ENCODE measurements at regions of chr1 and their contacts with region 1.

Region 1: DNA sequence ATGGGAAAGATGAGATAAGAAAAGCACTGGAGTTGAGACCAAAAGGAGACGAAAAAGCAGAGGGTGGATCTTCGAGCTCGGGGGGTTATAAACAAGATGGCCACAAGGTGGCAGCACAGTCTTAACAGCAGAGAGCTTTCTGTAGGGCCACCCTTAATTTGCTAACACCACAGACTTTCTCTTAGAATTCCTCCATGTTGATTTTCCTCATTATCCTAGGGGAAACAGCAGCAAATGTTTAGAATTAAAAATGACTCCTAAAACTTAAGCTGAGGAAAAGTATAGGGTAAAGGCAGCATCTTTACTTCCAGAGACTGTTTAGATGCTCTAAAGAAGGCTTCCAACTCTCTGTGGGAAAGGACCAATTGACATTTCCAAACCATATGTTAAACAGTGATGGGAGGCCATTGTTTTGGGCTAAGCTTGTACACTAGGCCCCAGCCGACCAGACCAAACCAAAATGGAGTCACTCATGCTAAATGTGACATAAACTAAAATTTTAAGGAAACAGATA is 2.5 kb upstream of the APOBEC4 start:
- DNase-seq: peak; percentile 52
- H3K4me3 Mint-ChIP-seq: no peak overlapping the region
- H3K27ac Mint-ChIP-seq: peak overlapping the region; percentile 0
- H3K4me1 Mint-ChIP-seq: peaks cover 48% of the 10 kb centered on the region
- H3K27me3 Mint-ChIP-seq: no peaks in the 10 kb centered on the region

Region 2: DNA sequence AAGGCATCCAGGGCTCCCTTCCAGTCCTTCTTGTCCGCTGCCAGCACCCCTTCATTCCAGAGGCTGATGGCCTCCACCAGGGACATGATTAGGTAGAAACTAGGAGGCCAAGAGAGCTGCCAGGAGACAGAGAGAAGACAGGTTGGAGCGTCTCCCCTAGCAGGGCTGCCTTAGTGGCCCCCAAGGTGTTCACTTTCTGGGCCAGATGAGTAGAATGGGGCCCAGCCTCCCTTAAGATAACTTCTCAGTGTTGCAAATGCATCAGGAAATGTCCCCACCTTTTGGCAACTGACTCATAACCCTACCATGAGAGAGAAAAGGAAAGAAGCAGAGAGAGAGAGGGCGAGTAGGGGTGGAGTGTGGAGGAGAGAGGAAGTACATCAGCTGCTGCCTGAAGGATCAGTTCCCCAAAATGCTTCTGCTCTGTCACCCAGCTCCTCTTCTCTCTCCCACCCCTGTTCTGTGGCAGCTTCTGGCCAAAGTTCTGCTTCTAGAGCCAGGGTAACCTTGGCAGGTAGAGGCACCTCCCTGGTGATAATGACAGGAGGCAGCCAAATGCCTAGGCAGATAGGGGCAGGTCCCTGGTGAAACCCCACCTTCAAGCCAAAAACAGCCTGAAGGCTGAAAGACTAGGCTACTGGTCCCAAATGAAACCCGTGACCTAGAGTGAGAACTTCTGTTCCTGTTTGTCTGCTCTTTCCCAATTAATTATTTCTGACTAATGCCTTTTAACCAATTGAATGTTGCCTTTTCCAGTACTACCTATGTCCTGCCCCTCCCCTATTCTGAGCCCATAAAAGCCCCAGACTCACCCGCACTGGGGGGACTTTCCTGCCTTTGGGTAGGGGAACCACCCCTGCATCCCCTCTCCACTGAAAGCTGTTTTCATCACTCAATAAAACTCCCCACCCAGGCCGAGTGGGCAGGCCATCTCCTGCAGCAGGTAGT is 65.1 kb before region 1 on chr1 and contains the start of gene NCF2:
- intact Hi-C with region 1: loop called (anchors 1 kb)
- DNase-seq: peak; percentile 68
- H3K4me3 Mint-ChIP-seq: peak within 1 kb of the TSS; percentile 69
- H3K27ac Mint-ChIP-seq: peak within 1 kb of the TSS; percentile 84
- H3K4me1 Mint-ChIP-seq: peaks cover 50% of the 10 kb centered on the region
- H3K27me3 Mint-ChIP-seq: peaks cover 2% of the 10 kb centered on the region
- total RNA-seq, gene NCF2: 4.8 and 5.9 TPM in 2 replicates

Region 3: GRCh38 chr1:183685112-183685713 is 29.6 kb after region 1 on chr1:
- intact Hi-C with region 1: loop called (anchors 1 kb)
- DNase-seq: peak; percentile 11
- H3K4me3 Mint-ChIP-seq: no peak overlapping the region
- H3K27ac Mint-ChIP-seq: no peak overlapping the region
- H3K4me1 Mint-ChIP-seq: peaks cover 9% of the 10 kb centered on the region
- H3K27me3 Mint-ChIP-seq: peaks cover 19% of the 10 kb centered on the region

Region 4: GRCh38 chr1:183841950-183842794 is 186.6 kb after region 1 on chr1:
- intact Hi-C with region 1: loop called (anchors 2 kb)
- DNase-seq: peak; percentile 20
- H3K4me3 Mint-ChIP-seq: peak overlapping the region; percentile 71
- H3K27ac Mint-ChIP-seq: peak overlapping the region; percentile 89
- H3K4me1 Mint-ChIP-seq: peaks cover 33% of the 10 kb centered on the region
- H3K27me3 Mint-ChIP-seq: no peaks in the 10 kb centered on the region

Region 5: GRCh38 chr1:184051485-184052193 is 396.0 kb after region 1 on chr1 and contains the start of gene TSEN15:
- intact Hi-C with region 1: loop called (anchors 5 kb)
- DNase-seq: peak; percentile 71
- H3K4me3 Mint-ChIP-seq: peak within 1 kb of the TSS; percentile 99
- H3K27ac Mint-ChIP-seq: peak within 1 kb of the TSS; percentile 99
- H3K4me1 Mint-ChIP-seq: peaks cover 40% of the 10 kb centered on the region
- H3K27me3 Mint-ChIP-seq: peaks cover 28% of the 10 kb centered on the region
- total RNA-seq, gene TSEN15: 49.8 and 50.2 TPM in 2 replicates

Region 6: DNA sequence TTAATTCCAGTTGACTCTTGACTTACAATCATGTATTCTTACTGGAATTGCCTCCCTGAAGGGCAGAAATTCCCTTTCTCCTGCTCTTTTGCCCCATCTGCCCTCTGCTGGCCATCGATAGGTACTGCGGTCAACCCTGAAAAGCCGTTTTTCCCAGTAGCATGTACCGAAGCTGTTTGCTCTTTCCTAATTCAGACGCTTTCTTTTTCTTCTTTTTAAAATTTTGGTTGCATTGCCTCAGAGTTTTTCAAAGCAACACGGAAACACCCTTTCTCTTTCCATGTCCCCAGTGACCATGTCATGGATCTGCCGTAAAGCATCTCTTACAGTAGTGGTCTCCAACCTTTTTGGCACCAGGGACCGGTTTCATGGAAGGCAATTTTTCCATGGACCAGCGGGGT is 567.0 kb after region 1 on chr1:
- intact Hi-C with region 1: loop called (anchors 2 kb)
- DNase-seq: peak; percentile 22
- H3K4me3 Mint-ChIP-seq: no peak overlapping the region
- H3K27ac Mint-ChIP-seq: no peak overlapping the region
- H3K4me1 Mint-ChIP-seq: peaks cover 7% of the 10 kb centered on the region
- H3K27me3 Mint-ChIP-seq: peaks cover 6% of the 10 kb centered on the region